ENCODE measurements at regions of chr11 and their contacts with region 1.

Region 1: DNA sequence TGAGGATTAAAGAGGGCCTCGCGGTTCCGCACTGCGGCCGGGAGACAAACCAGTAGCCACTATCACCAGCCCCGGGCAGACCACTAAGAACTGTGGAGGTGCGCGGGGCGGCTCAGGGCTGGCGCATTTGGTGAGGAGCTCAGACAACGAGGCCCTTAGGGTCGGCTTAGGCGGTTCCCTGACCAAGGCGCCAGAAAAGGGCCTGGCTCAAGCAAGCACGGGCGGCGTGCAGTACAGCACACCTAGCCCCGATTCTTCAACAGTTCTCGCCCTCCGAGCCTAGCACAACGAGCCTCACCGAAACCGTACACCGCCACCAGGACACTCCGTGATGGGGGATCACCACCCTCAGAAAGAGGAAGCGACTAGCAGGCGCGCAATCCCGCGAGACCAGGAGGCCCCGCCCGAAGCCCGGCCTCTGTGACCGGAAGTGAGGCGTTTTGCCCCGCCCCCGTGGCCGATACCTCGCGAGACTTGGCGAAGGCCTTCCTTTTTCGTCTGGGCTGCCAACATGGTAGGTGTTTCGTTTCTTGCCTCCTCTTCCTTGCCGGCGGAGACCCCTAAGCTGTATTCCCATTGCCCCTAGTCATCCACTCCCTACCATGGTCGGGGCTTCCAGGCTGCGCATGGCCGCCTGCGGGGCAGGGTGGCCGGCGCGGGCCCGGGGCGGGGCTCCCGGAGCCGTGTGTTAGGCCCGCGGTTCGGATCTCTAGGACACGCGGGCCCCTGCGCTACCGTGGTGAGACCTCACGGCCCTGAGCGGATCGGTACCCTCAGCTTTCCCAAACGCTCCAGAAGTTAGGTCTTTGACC is at the starts of genes RPL27A and TRIM66:
- DNase-seq: peak; percentile 98 to 100
- ATAC-seq: peak; percentile 96
- total RNA-seq, gene RPL27A: 731 to 768 TPM
- total RNA-seq, gene TRIM66: 9.9 to 12.5 TPM

Region 2: GRCh38 chr11:8807544-8808225 is 125.2 kb after region 1 on chr11:
- intact Hi-C with region 1: loop called in 1 of 2 experiments (anchors 5 kb)
- DNase-seq: peak; percentile 52 to 73
- ATAC-seq: peak; percentile 74

Measured in left colon (tissue), 2 donors.